Naive thymus-derived CD4-positive, alpha-beta T cell (primary cell): ENCODE measurements at regions of chr5 and their contacts with region 1.

Region 1: GRCh38 chr5:109971968-109972367 is 282.2 kb downstream of the MAN2A1 start:
- DNase-seq: no peak
- ATAC-seq: no peak
- H3K4me3 ChIP-seq: no peak overlapping the region
- H3K4me3 Mint-ChIP-seq: no peak overlapping the region
- H3K27ac ChIP-seq: no peak overlapping the region
- H3K27ac Mint-ChIP-seq: no peak overlapping the region
- H3K4me1 ChIP-seq: no peaks in the 10 kb centered on the region
- H3K4me1 Mint-ChIP-seq: peaks cover 2 to 26% (median 20%) of the 10 kb centered on the region in 7 donors
- H3K27me3 ChIP-seq: no peaks in the 10 kb centered on the region
- H3K27me3 Mint-ChIP-seq: no peaks in the 10 kb centered on the region

Region 2: GRCh38 chr5:109876941-109877650 is 94.9 kb before region 1 on chr5:
- CTCF ChIA-PET with region 1: no interaction called
- POLR2A ChIA-PET with region 1: no interaction called
- intact Hi-C with region 1: no loop called
- DNase-seq: no peak
- ATAC-seq: no peak
- H3K4me3 ChIP-seq: no peak overlapping the region
- H3K4me3 Mint-ChIP-seq: peak overlapping the region in 1 of 10 donors; percentile 75
- H3K27ac ChIP-seq: no peak overlapping the region
- H3K27ac Mint-ChIP-seq: peak overlapping the region in 2 of 9 donors; percentile 42 to 76
- H3K4me1 ChIP-seq: peaks cover 0 to 17% of the 10 kb centered on the region in 2 donors
- H3K4me1 Mint-ChIP-seq: peaks cover 17 to 61% (median 45%) of the 10 kb centered on the region in 7 donors
- H3K27me3 ChIP-seq: no peaks in the 10 kb centered on the region
- H3K27me3 Mint-ChIP-seq: no peaks in the 10 kb centered on the region

Region 3: DNA sequence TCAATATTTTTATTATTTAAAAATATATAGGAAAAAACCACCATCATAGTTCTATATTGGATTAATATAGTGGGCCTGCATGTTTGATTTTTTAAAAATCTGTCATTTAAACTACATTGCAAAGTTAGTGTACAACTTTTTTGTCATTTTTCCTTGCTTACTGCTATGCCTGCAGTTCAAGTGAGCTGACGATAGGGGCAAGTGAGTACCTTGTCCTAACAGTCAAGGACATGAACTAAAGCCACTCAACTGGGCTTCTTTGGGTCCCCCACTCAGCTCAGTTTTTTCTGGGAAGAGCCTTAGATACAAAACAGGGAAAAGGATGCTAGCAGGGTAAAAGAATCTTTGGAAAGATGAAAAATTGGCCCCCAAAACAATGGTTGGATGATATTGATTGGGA is 12.3 kb before region 1 on chr5:
- CTCF ChIA-PET with region 1: no interaction called
- POLR2A ChIA-PET with region 1: no interaction called
- intact Hi-C with region 1: loop called in 1 of 2 experiments (anchors 2 kb)
- DNase-seq: no peak
- ATAC-seq: no peak
- H3K4me3 ChIP-seq: no peak overlapping the region
- H3K4me3 Mint-ChIP-seq: no peak overlapping the region
- H3K27ac ChIP-seq: no peak overlapping the region
- H3K27ac Mint-ChIP-seq: peak overlapping the region in 2 of 9 donors; percentile 13 to 32
- H3K4me1 ChIP-seq: peaks cover 0 to 18% of the 10 kb centered on the region in 2 donors
- H3K4me1 Mint-ChIP-seq: peaks cover 7 to 35% (median 28%) of the 10 kb centered on the region in 7 donors
- H3K27me3 ChIP-seq: no peaks in the 10 kb centered on the region
- H3K27me3 Mint-ChIP-seq: no peaks in the 10 kb centered on the region